ENCODE measurements at regions of chr15 and their contacts with region 1.

Region 1: DNA sequence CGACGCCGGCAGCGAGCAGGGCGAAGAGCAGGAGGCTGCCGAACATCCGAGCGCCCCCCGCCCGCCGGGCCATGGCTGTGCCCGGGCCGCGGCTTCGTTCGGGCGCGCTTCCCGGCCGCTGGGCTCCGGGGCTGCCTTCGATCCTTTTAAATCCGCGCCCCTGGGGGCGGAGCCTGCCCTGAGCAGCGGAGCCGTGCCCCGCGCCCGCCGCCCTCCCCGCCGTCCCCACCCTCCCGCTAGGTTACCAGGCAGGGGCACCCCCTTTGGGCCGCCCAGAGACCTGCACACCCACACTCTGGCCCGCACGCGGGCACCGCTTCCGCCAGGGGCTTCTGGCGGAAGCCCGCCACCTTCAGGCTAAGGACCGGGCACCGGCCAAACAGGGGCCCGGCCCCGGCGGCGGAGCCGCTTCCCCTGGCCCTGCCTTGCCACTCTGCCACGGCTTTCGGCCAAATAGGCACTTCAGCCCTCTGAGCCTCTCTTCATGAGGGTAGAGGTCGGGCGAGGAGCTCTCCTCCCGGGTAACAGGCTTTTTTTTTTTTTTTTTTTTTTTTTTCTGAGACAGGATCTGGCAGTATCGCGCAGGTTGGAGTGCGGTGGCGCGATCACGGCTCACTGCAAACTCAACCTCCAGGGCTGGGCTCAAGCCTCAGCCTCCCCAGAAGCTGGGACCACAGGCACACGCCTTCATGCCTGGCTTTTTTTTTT is at the start of gene NMB:
- DNase-seq: peak; percentile 75
- H3K4me3 ChIP-seq: peak within 1 kb of the TSS; percentile 36 to 50 (median 47)
- H3K27ac ChIP-seq: peak within 1 kb of the TSS; percentile 49
- H3K4me1 ChIP-seq: peaks cover 23% of the 10 kb centered on the region
- H3K27me3 ChIP-seq: no peaks in the 10 kb centered on the region
- CTCF ChIP-seq: peak; percentile 41 to 56
- POLR2A ChIP-seq: no peak
- total RNA-seq, gene NMB: 9.6 and 9.8 TPM in 2 replicates

Region 2: GRCh38 chr15:84588053-84588874 is 70.0 kb before region 1 on chr15:
- CTCF ChIA-PET with region 1: interaction called, 5 read pairs
- POLR2A ChIA-PET with region 1: no interaction called
- dilution Hi-C with region 1: no loop called
- intact Hi-C with region 1: loop called (anchors 1 kb)
- DNase-seq: peak; percentile 72
- H3K4me3 ChIP-seq: peak overlapping the region in 2 of 3 experiments; percentile 24 to 58
- H3K27ac ChIP-seq: no peak overlapping the region
- H3K4me1 ChIP-seq: peaks cover 5% of the 10 kb centered on the region
- H3K27me3 ChIP-seq: peaks cover 0 to 4% of the 10 kb centered on the region in 2 experiments
- CTCF ChIP-seq: peak; percentile 43 to 82
- POLR2A ChIP-seq: no peak

Region 3: GRCh38 chr15:84633311-84634227 is 24.7 kb before region 1 on chr15:
- CTCF ChIA-PET with region 1: interaction called, 7 read pairs
- POLR2A ChIA-PET with region 1: interaction called, 4 read pairs
- dilution Hi-C with region 1: no loop called
- intact Hi-C with region 1: loop called (anchors 1 kb)
- DNase-seq: peak; percentile 85
- H3K4me3 ChIP-seq: peak overlapping the region; percentile 44 to 66 (median 46)
- H3K27ac ChIP-seq: peak overlapping the region; percentile 28
- H3K4me1 ChIP-seq: peaks cover 26% of the 10 kb centered on the region
- H3K27me3 ChIP-seq: no peaks in the 10 kb centered on the region
- CTCF ChIP-seq: no peak
- POLR2A ChIP-seq: no peak

Region 4: GRCh38 chr15:84716036-84716799 is 58.0 kb after region 1 on chr15 and contains the start of gene SEC11A:
- CTCF ChIA-PET with region 1: interaction called, 5 read pairs
- POLR2A ChIA-PET with region 1: no interaction called
- dilution Hi-C with region 1: no loop called
- intact Hi-C with region 1: loop called (anchors 1 kb)
- DNase-seq: peak; percentile 97
- H3K4me3 ChIP-seq: peak within 1 kb of the TSS; percentile 55 to 95 (median 85)
- H3K27ac ChIP-seq: peak within 1 kb of the TSS; percentile 56
- H3K4me1 ChIP-seq: peaks cover 22% of the 10 kb centered on the region
- H3K27me3 ChIP-seq: no peaks in the 10 kb centered on the region
- CTCF ChIP-seq: no peak
- POLR2A ChIP-seq: peak; percentile 97
- total RNA-seq, gene SEC11A: 192 and 204 TPM in 2 replicates

Region 5: DNA sequence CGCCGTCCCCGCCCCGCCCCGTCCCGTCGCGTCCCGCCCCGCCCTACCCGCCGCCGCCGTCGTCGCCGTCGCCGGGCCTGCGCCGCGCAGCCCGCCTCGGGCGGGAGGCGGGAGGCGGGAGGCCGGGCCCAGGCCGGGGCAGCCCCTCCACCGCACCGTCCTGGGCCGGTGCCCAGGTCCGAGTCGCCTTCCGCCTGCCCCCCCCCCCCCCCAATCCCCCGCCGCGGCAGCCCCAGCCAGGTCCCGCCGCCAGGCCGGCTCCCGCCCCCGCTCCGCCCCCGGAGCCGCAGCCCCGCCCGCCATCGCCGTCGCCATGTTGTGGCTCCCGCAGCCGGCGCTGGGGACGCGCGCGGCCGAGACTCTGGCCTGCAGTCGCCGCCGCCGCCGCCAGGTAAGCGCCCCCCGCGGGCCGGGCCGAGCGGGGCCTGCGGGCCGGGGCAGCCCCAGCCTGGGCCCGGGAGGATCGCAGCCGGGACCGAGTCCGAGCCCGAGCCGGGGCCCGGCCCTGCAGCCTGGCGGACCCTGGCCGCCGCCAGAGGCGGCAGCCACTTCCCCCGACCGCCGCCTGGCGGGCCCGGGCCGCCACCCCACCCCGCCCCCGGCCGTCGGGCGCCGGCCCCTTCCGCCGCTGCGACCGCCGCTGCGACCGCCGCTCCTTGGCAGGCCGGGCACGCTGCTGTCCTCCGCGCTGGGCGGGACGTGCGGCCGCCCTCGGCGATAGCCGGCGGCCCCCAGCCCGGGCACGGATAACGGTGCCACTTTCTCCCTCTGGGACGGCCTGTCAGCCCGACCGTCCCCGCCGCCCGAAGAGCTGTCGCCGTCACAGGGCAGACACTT is 90.3 kb after region 1 on chr15 and contains the start of gene ZNF592:
- CTCF ChIA-PET with region 1: interaction called, 6 read pairs
- POLR2A ChIA-PET with region 1: no interaction called
- dilution Hi-C with region 1: no loop called
- intact Hi-C with region 1: loop called (anchors 1 kb)
- DNase-seq: peak; percentile 67
- H3K4me3 ChIP-seq: peak within 1 kb of the TSS; percentile 62 to 90 (median 86)
- H3K27ac ChIP-seq: peak within 1 kb of the TSS; percentile 67
- H3K4me1 ChIP-seq: peaks cover 30% of the 10 kb centered on the region
- H3K27me3 ChIP-seq: no peaks in the 10 kb centered on the region
- CTCF ChIP-seq: peak in 1 of 2 donors; percentile 23
- POLR2A ChIP-seq: peak; percentile 82
- total RNA-seq, gene ZNF592: 21.1 and 22.3 TPM in 2 replicates

Region 6: GRCh38 chr15:84818261-84819131 is 160.3 kb after region 1 on chr15:
- CTCF ChIA-PET with region 1: interaction called, 7 read pairs
- POLR2A ChIA-PET with region 1: interaction called, 3 read pairs
- dilution Hi-C with region 1: no loop called
- intact Hi-C with region 1: loop called (anchors 1 kb)
- DNase-seq: peak; percentile 91
- H3K4me3 ChIP-seq: peak overlapping the region in 2 of 3 experiments; percentile 57 to 58
- H3K27ac ChIP-seq: peak overlapping the region; percentile 88
- H3K4me1 ChIP-seq: peaks cover 42% of the 10 kb centered on the region
- H3K27me3 ChIP-seq: no peaks in the 10 kb centered on the region
- CTCF ChIP-seq: peak in 1 of 2 donors; percentile 2
- POLR2A ChIP-seq: peak; percentile 71

Measured in endothelial cell of umbilical vein (primary cell).